Endothelial cell of umbilical vein (primary cell): ENCODE measurements at regions of chr1 and their contacts with region 1.

Region 1: GRCh38 chr1:39026051-39026865 is at the start of gene NDUFS5:
- DNase-seq: peak; percentile 88
- H3K4me3 ChIP-seq: peak within 1 kb of the TSS; percentile 45 to 86 (median 60)
- H3K27ac ChIP-seq: peak within 1 kb of the TSS; percentile 89
- H3K4me1 ChIP-seq: peaks cover 7% of the 10 kb centered on the region
- H3K27me3 ChIP-seq: no peaks in the 10 kb centered on the region
- CTCF ChIP-seq: no peak
- POLR2A ChIP-seq: peak; percentile 95
- total RNA-seq, gene NDUFS5: 325 and 327 TPM in 2 replicates

Region 2: GRCh38 chr1:39047374-39048229 is 21.3 kb after region 1 on chr1:
- CTCF ChIA-PET with region 1: interaction called, 4 read pairs
- POLR2A ChIA-PET with region 1: no interaction called
- dilution Hi-C with region 1: no loop called
- intact Hi-C with region 1: loop called (anchors 1 kb)
- DNase-seq: peak; percentile 87
- H3K4me3 ChIP-seq: no peak overlapping the region
- H3K27ac ChIP-seq: peak overlapping the region; percentile 74
- H3K4me1 ChIP-seq: peaks cover 16% of the 10 kb centered on the region
- H3K27me3 ChIP-seq: no peaks in the 10 kb centered on the region
- CTCF ChIP-seq: no peak
- POLR2A ChIP-seq: no peak

Region 3: GRCh38 chr1:39091845-39092645 is 65.8 kb after region 1 on chr1:
- CTCF ChIA-PET with region 1: interaction called, 26 read pairs
- POLR2A ChIA-PET with region 1: no interaction called
- dilution Hi-C with region 1: no loop called
- intact Hi-C with region 1: no loop called
- DNase-seq: peak; percentile 76
- H3K4me3 ChIP-seq: no peak overlapping the region
- H3K27ac ChIP-seq: no peak overlapping the region
- H3K4me1 ChIP-seq: no peaks in the 10 kb centered on the region
- H3K27me3 ChIP-seq: no peaks in the 10 kb centered on the region
- CTCF ChIP-seq: peak; percentile 64
- POLR2A ChIP-seq: no peak

Region 4: GRCh38 chr1:39326832-39327231 is 300.6 kb after region 1 on chr1:
- CTCF ChIA-PET with region 1: no interaction called
- POLR2A ChIA-PET with region 1: no interaction called
- dilution Hi-C with region 1: no loop called
- intact Hi-C with region 1: no loop called
- DNase-seq: no peak
- H3K4me3 ChIP-seq: no peak overlapping the region
- H3K27ac ChIP-seq: no peak overlapping the region
- H3K4me1 ChIP-seq: no peaks in the 10 kb centered on the region
- H3K27me3 ChIP-seq: no peaks in the 10 kb centered on the region
- CTCF ChIP-seq: no peak
- POLR2A ChIP-seq: no peak